Activated CD8-positive, alpha-beta memory T cell treated with anti-CD3 and anti-CD28 coated beads, Interleukin-2, amount 10 ng/mL, durations not matched to agents 7 days and 5 days (primary cell): ENCODE measurements at regions of chr17 and their contacts with region 1.

Region 1: GRCh38 chr17:51371732-51372151 is 111.4 kb downstream of the UTP18 start:
- DNase-seq: peak; percentile 57
- ATAC-seq: no peak
- H3K4me3 Mint-ChIP-seq: no peak overlapping the region
- H3K27ac Mint-ChIP-seq: no peak overlapping the region
- H3K4me1 Mint-ChIP-seq: peaks cover 11% of the 10 kb centered on the region
- H3K27me3 Mint-ChIP-seq: peaks cover 6% of the 10 kb centered on the region

Region 2: GRCh38 chr17:51289696-51290111 is 82.0 kb before region 1 on chr17:
- CTCF ChIA-PET with region 1: no interaction called
- DNase-seq: no peak
- ATAC-seq: no peak
- H3K4me3 Mint-ChIP-seq: no peak overlapping the region
- H3K27ac Mint-ChIP-seq: no peak overlapping the region
- H3K4me1 Mint-ChIP-seq: peaks cover 2% of the 10 kb centered on the region
- H3K27me3 Mint-ChIP-seq: no peaks in the 10 kb centered on the region

Region 3: GRCh38 chr17:51540151-51540550 is 168.4 kb after region 1 on chr17:
- CTCF ChIA-PET with region 1: interaction called, 10 read pairs
- DNase-seq: no peak
- ATAC-seq: no peak
- H3K4me3 Mint-ChIP-seq: no peak overlapping the region
- H3K27ac Mint-ChIP-seq: no peak overlapping the region
- H3K4me1 Mint-ChIP-seq: peaks cover 4% of the 10 kb centered on the region
- H3K27me3 Mint-ChIP-seq: peaks cover 7% of the 10 kb centered on the region